OCI-LY7 (cell line): ENCODE measurements at regions of chr17 and their contacts with region 1.

Region 1: DNA sequence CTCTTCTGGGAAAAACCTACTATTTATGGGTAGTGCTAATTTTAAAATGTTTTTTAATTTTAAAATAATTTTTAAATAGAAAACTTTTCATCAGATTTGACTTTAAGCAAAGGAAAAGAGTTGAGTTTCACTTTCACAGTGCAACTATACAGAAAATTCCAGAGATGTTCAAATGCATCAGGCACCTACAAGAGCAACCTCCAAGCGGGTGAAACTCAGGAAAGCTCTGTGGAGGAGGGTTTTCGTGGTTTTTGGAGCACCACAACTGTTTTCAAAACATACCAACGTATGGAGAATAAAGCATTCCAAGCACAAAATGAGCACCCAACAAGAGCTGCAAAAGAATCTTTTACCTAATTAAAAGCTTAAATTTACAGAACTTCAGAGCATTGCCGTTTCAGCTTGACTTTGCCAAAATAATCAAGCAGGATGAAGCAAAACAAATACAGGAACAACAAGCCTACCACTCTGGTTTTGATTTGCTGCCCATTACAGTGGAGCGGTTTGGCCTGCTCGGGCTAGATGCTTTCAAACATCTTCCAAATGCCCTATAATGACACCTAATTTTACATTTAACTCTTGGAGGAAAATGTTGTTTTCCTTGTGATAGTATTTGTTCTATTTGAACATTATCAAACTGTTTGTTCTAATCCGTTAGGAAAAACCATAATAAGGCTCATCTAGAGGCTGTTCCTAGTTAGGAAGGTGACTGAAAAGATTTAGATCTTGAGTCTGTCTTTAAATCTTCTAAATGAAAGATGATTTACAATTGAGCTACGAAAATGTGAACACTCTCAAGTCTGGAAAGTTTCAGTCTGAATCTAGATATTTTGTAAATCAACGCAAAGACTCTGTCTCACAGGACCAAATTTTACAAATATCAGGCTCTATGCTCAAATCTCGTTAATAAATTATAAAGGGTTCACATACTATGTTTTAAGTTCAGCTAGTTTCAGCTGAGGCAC is 34.5 kb downstream of the NACA2 start:
- DNase-seq: peak; percentile 38
- H3K4me3 ChIP-seq: peak overlapping the region; percentile 54
- H3K27ac ChIP-seq: peak overlapping the region; percentile 88
- H3K4me1 ChIP-seq: peaks cover 63% of the 10 kb centered on the region
- CTCF ChIP-seq: no peak

Region 2: GRCh38 chr17:61568219-61569072 is 11.9 kb after region 1 on chr17:
- CTCF ChIA-PET with region 1: no interaction called
- POLR2A ChIA-PET with region 1: interaction called, 16 read pairs
- intact Hi-C with region 1: no loop called
- DNase-seq: no peak
- H3K4me3 ChIP-seq: no peak overlapping the region
- H3K27ac ChIP-seq: no peak overlapping the region
- H3K4me1 ChIP-seq: peaks cover 38% of the 10 kb centered on the region
- CTCF ChIP-seq: no peak